ENCODE measurements at regions of chr5 and their contacts with region 1.

Region 1: GRCh38 chr5:177403792-177404640 is 3.6 kb upstream of the PFN3 start:
- DNase-seq: peak; percentile 94
- H3K4me3 ChIP-seq: peak overlapping the region; percentile 60 to 83
- H3K27ac ChIP-seq: peak overlapping the region in 1 of 2 experiments; percentile 96; a peak in 2 of 4 replicates
- H3K4me1 ChIP-seq: peaks cover 0 to 28% of the 10 kb centered on the region in 2 experiments; a peak in 1 of 4 replicates
- H3K27me3 ChIP-seq: no peaks in the 10 kb centered on the region
- CTCF ChIP-seq: peak; percentile 72
- EP300 ChIP-seq: no peak; a peak in 1 of 4 replicates
- RAD21 ChIP-seq: peak; percentile 81

Region 2: DNA sequence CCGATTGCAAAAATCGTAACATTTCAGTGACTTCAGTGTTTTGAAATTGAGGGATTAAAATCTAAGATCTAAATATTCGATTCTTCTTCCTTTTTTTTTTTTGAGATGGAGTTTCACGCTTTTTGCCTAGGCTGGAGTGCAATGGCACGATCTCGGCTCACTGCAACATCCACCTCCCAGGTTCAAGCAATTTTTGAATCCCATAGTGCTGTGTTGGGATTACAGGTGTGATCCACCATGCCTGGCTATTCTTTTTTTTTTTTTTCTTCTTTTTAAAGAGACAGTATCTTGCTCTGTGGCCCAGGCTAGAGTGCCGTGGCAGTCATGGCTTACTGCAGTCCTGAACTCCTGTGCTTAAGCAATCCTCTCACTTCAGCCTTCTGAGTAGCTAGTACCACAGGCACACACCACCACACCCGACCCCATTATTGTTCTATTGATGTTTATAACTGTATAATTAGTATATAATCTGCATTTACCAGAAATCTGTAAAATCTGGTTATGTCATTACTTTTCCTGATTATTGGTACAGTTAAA is 227.8 kb before region 1 on chr5:
- CTCF ChIA-PET with region 1: no interaction called
- POLR2A ChIA-PET with region 1: no interaction called
- DNase-seq: no peak
- H3K4me3 ChIP-seq: no peak overlapping the region
- H3K27ac ChIP-seq: no peak overlapping the region
- H3K4me1 ChIP-seq: no peaks in the 10 kb centered on the region
- H3K27me3 ChIP-seq: no peaks in the 10 kb centered on the region
- CTCF ChIP-seq: no peak
- EP300 ChIP-seq: no peak
- RAD21 ChIP-seq: no peak

Region 3: DNA sequence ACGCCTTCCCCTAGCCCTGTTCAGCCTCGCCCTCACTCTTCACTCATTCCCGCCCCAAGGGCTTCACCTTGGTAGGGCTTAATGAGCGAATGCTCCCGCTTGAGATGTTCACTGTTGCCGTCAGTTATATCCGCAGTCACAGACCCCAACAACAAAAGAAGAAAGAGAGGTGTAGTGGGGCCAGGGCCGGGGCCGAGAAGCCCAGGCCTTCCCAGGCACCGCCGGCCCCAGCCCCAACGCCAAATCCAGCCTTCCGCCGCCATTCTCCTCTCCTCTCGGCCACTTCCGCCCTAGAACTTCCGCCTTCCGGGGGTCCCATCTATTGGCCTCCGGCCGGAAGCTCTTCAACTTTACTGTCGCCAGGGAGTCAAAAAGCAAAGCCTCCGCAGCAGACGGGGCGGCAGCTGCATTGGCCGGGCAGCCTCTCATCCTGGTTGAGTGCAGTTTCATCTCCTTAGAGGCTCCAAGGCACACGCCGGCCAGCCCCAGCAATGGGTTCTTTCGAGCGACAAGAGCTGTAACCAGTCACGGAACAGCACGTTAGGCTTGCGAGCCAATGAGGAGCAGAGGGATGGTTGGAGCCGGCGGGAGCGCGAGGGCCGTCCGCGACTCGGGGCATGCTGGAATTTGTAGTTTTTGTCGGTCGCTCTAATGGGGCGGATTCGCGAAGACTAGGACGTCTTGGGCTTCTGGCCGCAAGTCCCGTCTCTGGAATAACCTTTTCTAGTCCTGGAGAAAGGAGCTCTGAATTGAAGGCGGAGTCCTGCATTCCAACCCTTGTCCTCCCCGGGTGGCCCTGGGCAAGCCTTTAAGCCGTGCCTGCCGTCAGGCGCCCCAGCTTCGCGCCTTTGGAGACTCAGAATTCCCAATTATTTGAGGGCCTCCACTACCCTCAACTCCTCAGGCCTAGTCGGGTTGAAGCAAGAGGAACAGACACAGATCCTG is 52.4 kb before region 1 on chr5 and contains the start of gene LMAN2:
- CTCF ChIA-PET with region 1: interaction called, 10 read pairs
- POLR2A ChIA-PET with region 1: interaction called, 3 read pairs
- DNase-seq: peak; percentile 95
- H3K4me3 ChIP-seq: peak within 1 kb of the TSS; percentile 96 to 100
- H3K27ac ChIP-seq: peak within 1 kb of the TSS; percentile 98
- H3K4me1 ChIP-seq: peaks cover 5 to 23% of the 10 kb centered on the region in 2 experiments; a peak in 3 of 4 replicates
- H3K27me3 ChIP-seq: no peaks in the 10 kb centered on the region
- CTCF ChIP-seq: no peak
- EP300 ChIP-seq: no peak
- RAD21 ChIP-seq: no peak
- polyA plus RNA-seq, gene LMAN2: 380 and 500 TPM in 2 replicates

Region 4: GRCh38 chr5:177390363-177391300 is 13.4 kb before region 1 on chr5:
- CTCF ChIA-PET with region 1: interaction called, 209 read pairs
- POLR2A ChIA-PET with region 1: interaction called, 18 read pairs
- DNase-seq: peak; percentile 95
- H3K4me3 ChIP-seq: no peak overlapping the region; a peak in 1 of 4 replicates
- H3K27ac ChIP-seq: no peak overlapping the region
- H3K4me1 ChIP-seq: peaks cover 0 to 3% of the 10 kb centered on the region in 2 experiments; a peak in 1 of 4 replicates
- H3K27me3 ChIP-seq: no peaks in the 10 kb centered on the region
- CTCF ChIP-seq: peak; percentile 88
- EP300 ChIP-seq: no peak
- RAD21 ChIP-seq: peak; percentile 95

Region 5: DNA sequence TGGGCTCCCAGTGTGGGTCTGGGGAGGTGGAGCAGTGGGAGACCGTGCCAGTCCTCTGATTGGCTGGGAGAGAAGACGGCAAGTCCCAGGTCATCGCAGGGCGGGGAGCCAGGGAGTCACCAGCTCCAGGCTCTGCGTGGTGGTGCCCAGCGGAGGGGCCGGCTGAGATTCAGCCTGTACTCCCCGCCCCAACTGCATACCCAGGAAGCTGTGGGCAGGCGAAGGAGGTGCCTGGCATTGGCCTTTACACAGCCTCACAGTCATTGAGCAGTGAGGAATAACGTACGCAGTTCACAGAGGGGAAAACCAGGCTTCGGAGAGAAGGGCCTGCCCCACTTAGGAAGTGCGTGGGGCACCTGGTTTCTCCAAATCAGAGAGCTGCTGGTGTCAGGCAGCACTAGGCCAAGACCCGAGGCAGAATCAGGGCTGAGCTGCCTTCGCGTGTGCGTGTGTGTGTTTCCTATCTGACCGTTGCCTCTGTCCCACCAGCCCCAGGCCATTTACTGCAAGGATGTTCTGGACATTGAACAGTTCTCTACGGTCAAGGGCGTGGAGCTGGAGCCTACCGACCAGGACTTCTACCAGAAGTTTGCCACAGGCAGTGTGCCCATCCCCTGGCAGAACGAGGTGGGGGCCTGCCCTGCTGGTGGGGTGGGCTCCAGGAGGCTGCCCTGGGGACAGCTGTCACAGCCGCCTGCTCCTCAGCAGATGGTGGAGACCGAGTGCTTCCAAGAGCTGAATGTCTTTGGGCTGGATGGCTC is 36.4 kb after region 1 on chr5:
- CTCF ChIA-PET with region 1: interaction called, 318 read pairs
- POLR2A ChIA-PET with region 1: interaction called, 46 read pairs
- DNase-seq: no peak
- H3K4me3 ChIP-seq: no peak overlapping the region
- H3K27ac ChIP-seq: peak overlapping the region in 1 of 2 experiments; percentile 31; a peak in 1 of 4 replicates
- H3K4me1 ChIP-seq: peaks cover 0 to 8% of the 10 kb centered on the region in 2 experiments; a peak in 1 of 4 replicates
- H3K27me3 ChIP-seq: no peaks in the 10 kb centered on the region
- CTCF ChIP-seq: no peak
- EP300 ChIP-seq: no peak
- RAD21 ChIP-seq: no peak

Region 6: GRCh38 chr5:177473461-177474001 is 69.5 kb after region 1 on chr5 and contains the start of gene DBN1:
- CTCF ChIA-PET with region 1: interaction called, 31 read pairs
- POLR2A ChIA-PET with region 1: no interaction called
- DNase-seq: peak; percentile 98
- H3K4me3 ChIP-seq: peak within 1 kb of the TSS; percentile 96
- H3K27ac ChIP-seq: peak within 1 kb of the TSS; percentile 52 to 92; a peak in 3 of 4 replicates
- H3K4me1 ChIP-seq: peaks cover 35 to 76% of the 10 kb centered on the region in 2 experiments; a peak in 3 of 4 replicates
- H3K27me3 ChIP-seq: no peaks in the 10 kb centered on the region
- CTCF ChIP-seq: no peak
- EP300 ChIP-seq: no peak
- RAD21 ChIP-seq: no peak
- polyA plus RNA-seq, gene DBN1: 176 and 244 TPM in 2 replicates

Region 7: GRCh38 chr5:177546258-177546741 is 142.3 kb after region 1 on chr5:
- CTCF ChIA-PET with region 1: interaction called, 12 read pairs
- POLR2A ChIA-PET with region 1: no interaction called
- DNase-seq: no peak
- H3K4me3 ChIP-seq: no peak overlapping the region
- H3K27ac ChIP-seq: peak overlapping the region; percentile 74 to 75
- H3K4me1 ChIP-seq: peaks cover 10 to 31% of the 10 kb centered on the region in 2 experiments
- H3K27me3 ChIP-seq: no peaks in the 10 kb centered on the region
- CTCF ChIP-seq: peak; percentile 35
- EP300 ChIP-seq: peak; percentile 24 to 51; a peak in 2 of 4 replicates
- RAD21 ChIP-seq: no peak